Mammary epithelial cell (primary cell): ENCODE measurements at regions of chr2 and their contacts with region 1.

Region 1: DNA sequence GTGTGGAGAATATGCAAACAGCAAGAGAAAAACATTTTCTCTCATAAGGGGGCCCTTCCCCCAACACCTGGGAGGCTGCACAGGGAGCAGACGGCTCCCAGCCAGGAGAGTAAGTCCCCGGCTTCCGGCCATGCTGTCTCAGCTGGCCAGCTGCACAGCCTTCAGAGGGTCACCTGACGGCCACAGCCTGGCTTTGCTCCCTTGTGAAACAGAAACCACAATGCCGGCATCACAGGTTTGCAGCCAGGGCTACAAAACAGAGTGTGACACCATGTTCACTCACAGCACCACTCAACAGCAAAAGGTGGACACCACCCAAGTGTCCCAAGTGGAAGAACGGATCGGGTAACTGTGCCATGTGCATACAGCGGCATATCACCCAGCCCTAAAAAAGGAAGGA is 86.9 kb upstream of the GPC1 start:
- DNase-seq: peak; percentile 24
- H3K4me3 ChIP-seq: no peak overlapping the region
- H3K27ac ChIP-seq: no peak overlapping the region
- H3K4me1 ChIP-seq: no peaks in the 10 kb centered on the region
- H3K27me3 ChIP-seq: no peaks in the 10 kb centered on the region
- CTCF ChIP-seq: no peak

Region 2: GRCh38 chr2:240269380-240269779 is 79.1 kb before region 1 on chr2:
- CTCF ChIA-PET with region 1: no interaction called
- dilution Hi-C with region 1: loop called (anchors 5 kb)
- in situ Hi-C with region 1: no loop called
- intact Hi-C with region 1: no loop called
- DNase-seq: no peak
- H3K4me3 ChIP-seq: no peak overlapping the region
- H3K27ac ChIP-seq: no peak overlapping the region
- H3K4me1 ChIP-seq: no peaks in the 10 kb centered on the region
- H3K27me3 ChIP-seq: no peaks in the 10 kb centered on the region
- CTCF ChIP-seq: no peak

Region 3: GRCh38 chr2:240298803-240299709 is 49.5 kb before region 1 on chr2:
- CTCF ChIA-PET with region 1: no interaction called
- dilution Hi-C with region 1: loop called (anchors 5 kb)
- in situ Hi-C with region 1: no loop called
- intact Hi-C with region 1: no loop called
- DNase-seq: no peak
- H3K4me3 ChIP-seq: no peak overlapping the region
- H3K27ac ChIP-seq: no peak overlapping the region
- H3K4me1 ChIP-seq: no peaks in the 10 kb centered on the region
- H3K27me3 ChIP-seq: no peaks in the 10 kb centered on the region
- CTCF ChIP-seq: peak in 1 of 2 donors; percentile 7

Region 4: GRCh38 chr2:240424341-240425235 is 76.1 kb after region 1 on chr2:
- CTCF ChIA-PET with region 1: no interaction called
- dilution Hi-C with region 1: loop called (anchors 5 kb)
- in situ Hi-C with region 1: no loop called
- intact Hi-C with region 1: no loop called
- DNase-seq: no peak
- H3K4me3 ChIP-seq: no peak overlapping the region
- H3K27ac ChIP-seq: no peak overlapping the region
- H3K4me1 ChIP-seq: no peaks in the 10 kb centered on the region
- H3K27me3 ChIP-seq: no peaks in the 10 kb centered on the region
- CTCF ChIP-seq: no peak